ENCODE measurements at regions of chr7 and their contacts with region 1.

Region 1: GRCh38 chr7:123865517-123866117 is 20.6 kb downstream of the HYAL4 start:
- DNase-seq: peak; percentile 49
- H3K4me3 ChIP-seq: no peak overlapping the region
- H3K27ac ChIP-seq: no peak overlapping the region
- H3K4me1 ChIP-seq: no peaks in the 10 kb centered on the region
- H3K27me3 ChIP-seq: no peaks in the 10 kb centered on the region; the same call in 1 of the 2 replicates
- CTCF ChIP-seq: peak; percentile 92
- EP300 ChIP-seq: no peak
- RAD21 ChIP-seq: peak; percentile 82

Region 2: DNA sequence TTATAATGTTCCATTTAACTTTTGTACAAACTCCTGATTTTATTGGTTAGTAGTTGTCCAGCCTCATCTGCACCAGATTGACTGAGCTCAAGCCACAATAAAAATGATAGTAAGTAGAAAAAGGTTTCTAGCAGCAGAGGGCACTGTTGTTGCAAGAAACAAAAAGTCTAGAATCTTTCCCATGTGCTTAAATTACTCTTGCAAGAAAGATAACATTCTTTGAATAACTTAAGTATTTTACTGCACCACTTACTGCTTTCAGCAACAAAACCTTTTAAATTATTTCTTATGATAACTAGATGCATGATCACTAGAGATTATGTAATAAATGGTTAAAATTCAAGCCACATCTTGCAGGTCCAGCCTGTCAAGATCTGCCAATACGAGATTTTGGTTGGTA is 182.9 kb before region 1 on chr7:
- CTCF ChIA-PET with region 1: interaction called, 24 read pairs
- POLR2A ChIA-PET with region 1: no interaction called
- DNase-seq: no peak
- H3K4me3 ChIP-seq: no peak overlapping the region
- H3K27ac ChIP-seq: peak overlapping the region in 1 of 2 experiments; percentile 43; a peak in 1 of 4 replicates
- H3K4me1 ChIP-seq: peaks cover 0 to 11% of the 10 kb centered on the region in 2 experiments; a peak in 2 of 4 replicates
- H3K27me3 ChIP-seq: no peaks in the 10 kb centered on the region
- CTCF ChIP-seq: peak; percentile 82
- EP300 ChIP-seq: no peak
- RAD21 ChIP-seq: peak; percentile 79

Region 3: DNA sequence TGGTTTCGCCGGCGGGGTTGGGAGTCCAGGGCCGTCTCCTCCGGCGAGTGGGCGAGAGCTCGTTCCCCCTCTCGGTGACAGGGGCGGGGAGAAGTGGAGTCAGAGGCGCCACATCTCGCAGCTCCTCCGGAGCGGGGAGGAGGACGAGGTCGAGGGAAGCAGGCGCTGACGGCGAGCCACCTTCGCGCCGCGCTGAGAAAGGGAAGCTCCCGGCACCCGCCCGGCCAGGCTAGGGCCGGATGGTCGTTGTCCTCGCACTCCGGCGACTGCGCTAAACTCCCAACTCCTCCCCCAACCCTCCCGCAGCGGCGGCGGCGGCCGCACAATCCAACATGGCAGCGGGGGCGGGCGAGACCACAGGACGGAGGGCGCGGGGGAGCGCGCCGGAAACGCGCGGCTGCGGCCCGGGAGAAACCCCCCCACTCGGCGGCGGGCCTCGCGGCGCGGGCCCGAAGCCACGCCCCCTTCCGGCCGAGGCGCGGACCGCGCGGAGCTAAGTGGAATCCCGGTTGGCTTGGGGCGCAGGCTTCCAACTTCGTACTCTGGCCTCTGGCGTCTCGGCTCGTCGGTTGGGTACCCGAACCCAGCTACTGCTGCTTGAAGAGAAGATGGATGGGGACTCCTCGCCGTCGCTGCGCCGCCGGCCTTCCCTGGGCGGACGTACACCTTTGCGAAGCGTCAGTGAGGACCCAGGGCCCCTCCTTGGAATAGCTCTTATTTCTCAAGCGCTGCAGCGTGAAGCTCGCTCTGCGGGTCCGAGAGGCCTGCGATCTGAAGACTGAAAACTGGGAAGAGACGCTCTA is 116.7 kb before region 1 on chr7 and contains the start of gene WASL:
- CTCF ChIA-PET with region 1: interaction called, 11 read pairs
- POLR2A ChIA-PET with region 1: no interaction called
- DNase-seq: peak; percentile 99
- H3K4me3 ChIP-seq: peak within 1 kb of the TSS; percentile 94 to 100
- H3K27ac ChIP-seq: peak within 1 kb of the TSS; percentile 96 to 100
- H3K4me1 ChIP-seq: peaks cover 27 to 57% of the 10 kb centered on the region in 2 experiments; a peak in 3 of 4 replicates
- H3K27me3 ChIP-seq: no peaks in the 10 kb centered on the region
- CTCF ChIP-seq: no peak
- EP300 ChIP-seq: peak; percentile 26 to 72; a peak in 2 of 4 replicates
- RAD21 ChIP-seq: peak; percentile 19; the same call in 1 of the 2 replicates
- polyA plus RNA-seq, gene WASL: 8.5 and 9.9 TPM in 2 replicates

Region 4: GRCh38 chr7:123784263-123784662 is 81.4 kb before region 1 on chr7:
- CTCF ChIA-PET with region 1: interaction called, 12 read pairs
- POLR2A ChIA-PET with region 1: no interaction called
- DNase-seq: no peak
- H3K4me3 ChIP-seq: no peak overlapping the region
- H3K27ac ChIP-seq: no peak overlapping the region
- H3K4me1 ChIP-seq: no peaks in the 10 kb centered on the region
- H3K27me3 ChIP-seq: no peaks in the 10 kb centered on the region
- CTCF ChIP-seq: no peak
- EP300 ChIP-seq: no peak
- RAD21 ChIP-seq: no peak

Region 5: DNA sequence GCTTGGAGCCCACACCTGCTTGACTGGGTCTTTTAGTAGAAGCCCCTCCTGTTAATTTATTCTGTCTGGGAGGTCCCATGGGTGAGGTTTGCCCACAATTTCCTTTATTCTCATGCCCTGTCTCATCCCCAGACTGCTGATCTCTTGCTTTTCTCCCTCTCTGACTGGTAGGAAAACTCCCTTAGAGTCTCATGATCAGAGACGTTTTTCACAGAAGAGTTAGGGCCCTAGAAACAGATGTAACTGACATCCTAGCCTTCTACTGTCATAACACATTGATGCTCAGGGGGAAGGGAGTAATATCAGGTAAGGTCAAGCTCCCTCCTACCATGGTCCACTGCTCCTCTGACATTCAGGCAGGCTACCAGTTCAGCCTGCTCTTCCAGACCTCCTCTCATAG is 73.1 kb before region 1 on chr7:
- CTCF ChIA-PET with region 1: interaction called, 127 read pairs
- POLR2A ChIA-PET with region 1: no interaction called
- DNase-seq: no peak
- H3K4me3 ChIP-seq: no peak overlapping the region
- H3K27ac ChIP-seq: no peak overlapping the region
- H3K4me1 ChIP-seq: no peaks in the 10 kb centered on the region
- H3K27me3 ChIP-seq: no peaks in the 10 kb centered on the region
- CTCF ChIP-seq: no peak
- EP300 ChIP-seq: no peak
- RAD21 ChIP-seq: no peak

Region 6: GRCh38 chr7:123823898-123824753 is 41.5 kb before region 1 on chr7:
- CTCF ChIA-PET with region 1: interaction called, 25 read pairs
- POLR2A ChIA-PET with region 1: no interaction called
- DNase-seq: no peak
- H3K4me3 ChIP-seq: no peak overlapping the region
- H3K27ac ChIP-seq: no peak overlapping the region
- H3K4me1 ChIP-seq: no peaks in the 10 kb centered on the region
- H3K27me3 ChIP-seq: no peaks in the 10 kb centered on the region
- CTCF ChIP-seq: no peak
- EP300 ChIP-seq: no peak
- RAD21 ChIP-seq: no peak

Region 7: DNA sequence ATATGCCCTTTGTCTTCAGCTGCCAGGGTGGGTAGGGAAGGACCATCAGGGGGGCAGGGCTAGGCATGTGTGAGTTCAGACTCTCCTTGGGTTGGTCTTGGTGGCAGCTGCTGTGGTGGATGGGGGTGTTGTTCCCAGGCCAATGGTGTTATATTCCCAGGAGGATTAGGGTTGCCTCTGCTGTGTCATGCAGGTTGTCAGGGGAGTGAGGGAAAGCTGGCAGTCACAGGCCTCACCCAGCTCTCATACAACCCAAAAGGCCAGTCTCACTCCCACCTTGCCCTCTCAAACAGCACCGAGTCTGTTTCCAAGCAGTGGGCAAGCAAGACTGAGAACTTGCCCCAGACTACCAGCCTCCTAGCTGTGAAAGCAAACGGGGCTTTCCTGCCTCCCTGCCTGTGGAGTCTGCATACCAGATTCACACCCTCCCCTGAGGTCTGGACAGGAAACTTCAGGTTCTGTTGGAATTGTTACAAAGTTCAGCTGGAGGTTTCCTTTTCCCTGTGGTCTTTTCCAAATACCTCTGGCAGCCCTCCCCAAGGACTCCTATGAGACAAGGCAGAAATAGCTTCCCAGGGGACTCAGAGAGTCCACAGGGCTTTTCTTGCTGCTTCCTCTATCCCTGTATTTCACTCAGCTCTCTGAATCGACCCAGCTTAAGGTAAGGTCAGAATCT is 19.3 kb before region 1 on chr7:
- CTCF ChIA-PET with region 1: interaction called, 26 read pairs
- POLR2A ChIA-PET with region 1: no interaction called
- DNase-seq: no peak
- H3K4me3 ChIP-seq: no peak overlapping the region
- H3K27ac ChIP-seq: no peak overlapping the region
- H3K4me1 ChIP-seq: peaks cover 0 to 5% of the 10 kb centered on the region in 2 experiments; a peak in 1 of 4 replicates
- H3K27me3 ChIP-seq: no peaks in the 10 kb centered on the region
- CTCF ChIP-seq: no peak
- EP300 ChIP-seq: no peak
- RAD21 ChIP-seq: no peak